Vagina (tissue), 2 donors: ENCODE measurements at regions of chr1 and their contacts with region 1.

Region 1: DNA sequence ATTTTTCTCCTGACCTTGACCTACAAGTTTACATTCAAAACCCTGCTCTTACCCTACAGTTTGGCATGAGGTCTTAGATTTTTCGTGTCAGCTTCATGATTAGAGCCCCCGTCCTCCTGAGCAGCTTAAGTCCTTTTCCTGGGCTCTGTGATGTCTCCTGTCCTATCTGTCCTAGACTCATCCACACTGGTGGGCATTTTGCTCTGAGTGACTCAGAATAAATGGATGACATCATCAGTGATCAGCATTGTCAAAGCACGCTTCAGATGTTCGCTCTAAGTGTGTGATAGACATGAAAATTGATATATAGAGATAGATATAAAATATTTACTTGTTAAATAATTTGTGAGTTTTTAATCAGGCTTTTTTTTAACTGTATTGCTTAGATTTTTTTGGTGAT is 21.8 kb downstream of the RGS13 start:
- DNase-seq: no peak
- H3K4me3 ChIP-seq: no peak overlapping the region
- H3K27ac ChIP-seq: no peak overlapping the region
- H3K4me1 ChIP-seq: no peaks in the 10 kb centered on the region
- H3K27me3 ChIP-seq: no peaks in the 10 kb centered on the region
- CTCF ChIP-seq: no peak
- POLR2A ChIP-seq: no peak

Region 2: GRCh38 chr1:192668434-192668983 is 10.7 kb after region 1 on chr1:
- intact Hi-C with region 1: loop called (anchors 2 kb)
- DNase-seq: no peak
- H3K4me3 ChIP-seq: no peak overlapping the region
- H3K27ac ChIP-seq: no peak overlapping the region
- H3K4me1 ChIP-seq: no peaks in the 10 kb centered on the region
- H3K27me3 ChIP-seq: no peaks in the 10 kb centered on the region
- CTCF ChIP-seq: no peak
- POLR2A ChIP-seq: no peak